ENCODE measurements at regions of chr1 and their contacts with region 1.

Region 1: GRCh38 chr1:34852677-34853217 is 6.8 kb downstream of the SMIM12 start:
- DNase-seq: peak; percentile 84 to 88
- H3K4me3 ChIP-seq: no peak overlapping the region
- H3K27ac ChIP-seq: no peak overlapping the region
- H3K4me1 ChIP-seq: peaks cover 4% of the 10 kb centered on the region
- H3K27me3 ChIP-seq: no peaks in the 10 kb centered on the region
- CTCF ChIP-seq: peak; percentile 97

Region 2: GRCh38 chr1:34113887-34114286 is 738.9 kb before region 1 on chr1:
- CTCF ChIA-PET with region 1: no interaction called
- POLR2A ChIA-PET with region 1: no interaction called
- intact Hi-C with region 1: loop called (anchors 10 kb)
- DNase-seq: no peak
- H3K4me3 ChIP-seq: no peak overlapping the region
- H3K27ac ChIP-seq: no peak overlapping the region
- H3K4me1 ChIP-seq: no peaks in the 10 kb centered on the region
- H3K27me3 ChIP-seq: no peaks in the 10 kb centered on the region
- CTCF ChIP-seq: peak; percentile 58

Region 3: GRCh38 chr1:34681480-34682451 is 171.0 kb before region 1 on chr1:
- CTCF ChIA-PET with region 1: no interaction called
- POLR2A ChIA-PET with region 1: no interaction called
- intact Hi-C with region 1: loop called (anchors 1 kb)
- DNase-seq: peak in 1 of 2 experiments; percentile 30
- H3K4me3 ChIP-seq: no peak overlapping the region
- H3K27ac ChIP-seq: no peak overlapping the region
- H3K4me1 ChIP-seq: no peaks in the 10 kb centered on the region
- H3K27me3 ChIP-seq: 0 out of 2 replicates have a peak, but pooled peaks cover 14% of the 10 kb centered on the region
- CTCF ChIP-seq: peak; percentile 86

Region 4: DNA sequence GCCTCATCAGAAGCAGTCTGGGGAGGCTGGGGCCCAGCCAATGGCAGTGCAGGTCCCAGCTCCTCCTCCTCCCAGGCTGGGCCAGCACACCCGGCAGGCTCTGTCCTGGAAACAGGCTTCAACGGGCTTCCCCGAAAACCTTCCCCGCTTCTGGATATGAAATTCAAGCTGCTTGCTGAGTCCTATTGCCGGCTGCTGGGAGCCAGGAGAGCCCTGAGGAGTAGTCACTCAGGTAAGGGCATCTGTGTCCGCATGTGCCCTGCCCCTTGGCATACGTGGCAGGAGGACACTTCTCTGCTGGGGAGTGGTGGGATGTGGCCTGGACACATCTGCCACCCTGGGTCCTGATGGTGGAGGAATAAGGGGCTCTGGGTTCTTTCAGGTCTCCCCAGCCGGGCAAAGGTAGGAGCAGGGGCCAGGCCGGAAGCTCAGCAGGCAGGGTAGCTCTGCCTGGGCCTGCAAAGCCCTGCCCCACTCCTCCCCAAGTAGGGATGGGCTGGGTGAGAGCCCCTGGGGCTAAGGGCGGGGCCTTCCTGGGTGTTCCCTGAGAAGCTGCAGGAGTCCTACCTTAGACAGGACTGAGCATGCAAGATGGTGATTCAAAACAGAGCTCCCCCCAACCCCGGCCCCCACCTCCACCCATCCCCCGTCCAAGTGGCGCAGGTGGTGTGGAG is 97.6 kb before region 1 on chr1 and contains the start of gene GJB5:
- CTCF ChIA-PET with region 1: interaction called, 3 read pairs
- POLR2A ChIA-PET with region 1: interaction called, 6 read pairs
- intact Hi-C with region 1: loop called (anchors 1 kb)
- DNase-seq: peak; percentile 83 to 87
- H3K4me3 ChIP-seq: peak within 1 kb of the TSS; percentile 52
- H3K27ac ChIP-seq: peak within 1 kb of the TSS; percentile 81
- H3K4me1 ChIP-seq: peaks cover 47% of the 10 kb centered on the region
- H3K27me3 ChIP-seq: no peaks in the 10 kb centered on the region
- CTCF ChIP-seq: no peak
- total RNA-seq, gene GJB5: 18.1 and 20.0 TPM in 2 replicates

Region 5: DNA sequence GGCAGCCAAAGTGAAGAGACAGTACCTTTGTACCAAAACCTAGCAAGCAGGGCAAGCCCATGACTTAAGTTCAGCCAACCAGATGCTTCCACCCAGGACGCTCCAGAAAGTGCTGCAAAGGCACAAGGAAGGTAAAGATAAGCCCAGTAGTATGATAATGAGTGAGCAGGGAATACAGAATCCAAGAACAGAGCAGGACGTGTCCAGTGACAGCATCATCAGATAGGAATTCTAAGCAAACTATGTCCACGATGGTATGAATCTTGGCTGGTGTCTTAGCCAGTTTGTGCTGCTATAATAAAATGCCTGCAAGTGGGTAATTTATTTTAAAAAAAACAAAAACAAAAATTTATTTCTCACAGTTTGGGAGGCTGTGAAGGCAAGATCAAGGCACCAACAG is 46.4 kb before region 1 on chr1:
- CTCF ChIA-PET with region 1: no interaction called
- POLR2A ChIA-PET with region 1: no interaction called
- intact Hi-C with region 1: loop called (anchors 5 kb)
- DNase-seq: no peak
- H3K4me3 ChIP-seq: no peak overlapping the region
- H3K27ac ChIP-seq: no peak overlapping the region
- H3K4me1 ChIP-seq: no peaks in the 10 kb centered on the region
- H3K27me3 ChIP-seq: no peaks in the 10 kb centered on the region
- CTCF ChIP-seq: no peak

Region 6: GRCh38 chr1:35001743-35002142 is 149.0 kb after region 1 on chr1:
- CTCF ChIA-PET with region 1: no interaction called
- POLR2A ChIA-PET with region 1: no interaction called
- intact Hi-C with region 1: no loop called
- DNase-seq: no peak
- H3K4me3 ChIP-seq: no peak overlapping the region
- H3K27ac ChIP-seq: no peak overlapping the region
- H3K4me1 ChIP-seq: no peaks in the 10 kb centered on the region
- H3K27me3 ChIP-seq: no peaks in the 10 kb centered on the region
- CTCF ChIP-seq: no peak

Region 7: GRCh38 chr1:35641233-35641866 is 788.6 kb after region 1 on chr1 and contains the start of gene PSMB2:
- CTCF ChIA-PET with region 1: no interaction called
- POLR2A ChIA-PET with region 1: no interaction called
- intact Hi-C with region 1: loop called (anchors 10 kb)
- DNase-seq: peak; percentile 88 to 97
- H3K4me3 ChIP-seq: peak within 1 kb of the TSS; percentile 84
- H3K27ac ChIP-seq: peak within 1 kb of the TSS; percentile 88
- H3K4me1 ChIP-seq: peaks cover 40% of the 10 kb centered on the region
- H3K27me3 ChIP-seq: peaks cover 17% of the 10 kb centered on the region
- CTCF ChIP-seq: no peak
- total RNA-seq, gene PSMB2: 138 and 206 TPM in 2 replicates

Region 8: GRCh38 chr1:35769759-35770446 is 917.2 kb after region 1 on chr1 and contains the start of gene CLSPN:
- CTCF ChIA-PET with region 1: interaction called, 3 read pairs
- POLR2A ChIA-PET with region 1: no interaction called
- intact Hi-C with region 1: loop called (anchors 5 kb)
- DNase-seq: peak; percentile 90 to 98
- H3K4me3 ChIP-seq: peak within 1 kb of the TSS; percentile 99
- H3K27ac ChIP-seq: no peak within 1 kb of the TSS
- H3K4me1 ChIP-seq: peaks cover 5% of the 10 kb centered on the region; the same call in 1 of the 2 replicates
- H3K27me3 ChIP-seq: no peaks in the 10 kb centered on the region
- CTCF ChIP-seq: no peak
- total RNA-seq, gene CLSPN: 18.9 and 26.7 TPM in 2 replicates

Measured in PC-9 (cell line).